ENCODE measurements at regions of chr2 and their contacts with region 1.

Region 1: GRCh38 chr2:158006961-158007719 is 94.5 kb upstream of the UPP2 start:
- DNase-seq: no peak
- H3K4me3 ChIP-seq: no peak overlapping the region
- H3K27ac ChIP-seq: no peak overlapping the region
- H3K4me1 ChIP-seq: peaks cover 0 to 12% (median 3%) of the 10 kb centered on the region in 6 donors
- H3K27me3 ChIP-seq: peaks cover 0 to 8% (median 0%) of the 10 kb centered on the region in 7 donors
- CTCF ChIP-seq: no peak
- POLR2A ChIP-seq: no peak

Region 2: GRCh38 chr2:157302492-157303099 is 704.5 kb before region 1 on chr2:
- intact Hi-C with region 1: loop called (anchors 5 kb)
- DNase-seq: no peak
- H3K4me3 ChIP-seq: no peak overlapping the region
- H3K27ac ChIP-seq: no peak overlapping the region
- H3K4me1 ChIP-seq: peaks cover 0 to 11% (median 0%) of the 10 kb centered on the region in 6 donors
- H3K27me3 ChIP-seq: peaks cover 0 to 7% (median 0%) of the 10 kb centered on the region in 7 donors
- CTCF ChIP-seq: peak; percentile 40 to 87 (median 73)
- POLR2A ChIP-seq: no peak

Region 3: DNA sequence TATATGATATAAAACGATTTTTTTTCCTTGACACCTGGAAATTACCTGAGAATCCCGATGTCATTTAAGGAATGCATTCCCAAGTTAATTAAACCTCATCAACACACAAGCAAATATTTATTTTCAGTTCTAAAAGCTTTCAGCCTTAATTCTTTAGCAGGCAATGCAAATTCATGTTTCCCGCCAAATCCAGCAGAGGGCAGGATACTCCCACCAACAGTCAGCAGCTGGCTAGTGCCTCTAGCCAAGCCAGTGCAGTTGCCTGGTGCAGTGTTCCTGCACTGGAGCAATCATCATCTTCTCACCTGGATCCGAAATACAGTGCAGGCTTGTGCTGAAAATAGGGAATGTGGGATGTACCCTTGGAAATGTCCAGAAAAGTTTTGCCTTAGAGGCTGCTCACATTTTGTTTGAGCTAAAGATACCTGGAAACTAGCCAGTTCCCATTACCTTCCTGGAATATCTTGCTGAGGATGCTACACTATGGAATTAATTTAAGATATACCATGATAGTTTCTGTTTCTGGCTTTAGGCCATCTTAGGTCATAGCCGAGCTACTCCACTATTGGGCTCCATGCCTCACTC is 514.9 kb before region 1 on chr2:
- intact Hi-C with region 1: loop called (anchors 5 kb)
- DNase-seq: peak; percentile 85
- H3K4me3 ChIP-seq: no peak overlapping the region
- H3K27ac ChIP-seq: no peak overlapping the region
- H3K4me1 ChIP-seq: peaks cover 0 to 14% (median 2%) of the 10 kb centered on the region in 6 donors
- H3K27me3 ChIP-seq: no peaks in the 10 kb centered on the region
- CTCF ChIP-seq: peak; percentile 54 to 84 (median 74)
- POLR2A ChIP-seq: no peak

Region 4: GRCh38 chr2:157501026-157501425 is 506.1 kb before region 1 on chr2:
- intact Hi-C with region 1: loop called (anchors 5 kb)
- DNase-seq: no peak
- H3K4me3 ChIP-seq: no peak overlapping the region
- H3K27ac ChIP-seq: no peak overlapping the region
- H3K4me1 ChIP-seq: peaks cover 0 to 15% (median 0%) of the 10 kb centered on the region in 6 donors
- H3K27me3 ChIP-seq: no peaks in the 10 kb centered on the region
- CTCF ChIP-seq: no peak
- POLR2A ChIP-seq: no peak

Region 5: DNA sequence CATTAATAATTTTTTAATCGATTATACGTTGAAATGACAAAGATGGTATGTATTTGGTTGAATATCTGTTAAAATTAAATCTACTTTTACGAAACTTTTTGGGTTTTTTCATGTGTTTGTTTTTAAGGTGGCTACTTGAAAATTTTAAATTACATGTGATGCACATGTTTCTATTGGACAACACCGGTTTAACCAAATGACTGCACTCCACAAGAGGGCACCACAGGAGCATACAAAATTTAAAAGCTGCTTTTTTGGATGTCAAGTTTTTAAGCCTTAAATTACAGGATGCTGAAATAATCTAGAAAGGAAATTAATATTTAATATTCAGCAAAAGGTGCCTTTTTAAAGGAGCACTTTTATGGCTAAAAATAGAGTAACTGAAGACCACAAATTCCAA is 229.7 kb before region 1 on chr2:
- intact Hi-C with region 1: loop called (anchors 5 kb)
- DNase-seq: no peak
- H3K4me3 ChIP-seq: no peak overlapping the region
- H3K27ac ChIP-seq: no peak overlapping the region
- H3K4me1 ChIP-seq: no peaks in the 10 kb centered on the region
- H3K27me3 ChIP-seq: no peaks in the 10 kb centered on the region
- CTCF ChIP-seq: peak in 9 of 11 experiments; percentile 31 to 61 (median 50)
- POLR2A ChIP-seq: no peak